ENCODE measurements at regions of chr17 and their contacts with region 1.

Region 1: DNA sequence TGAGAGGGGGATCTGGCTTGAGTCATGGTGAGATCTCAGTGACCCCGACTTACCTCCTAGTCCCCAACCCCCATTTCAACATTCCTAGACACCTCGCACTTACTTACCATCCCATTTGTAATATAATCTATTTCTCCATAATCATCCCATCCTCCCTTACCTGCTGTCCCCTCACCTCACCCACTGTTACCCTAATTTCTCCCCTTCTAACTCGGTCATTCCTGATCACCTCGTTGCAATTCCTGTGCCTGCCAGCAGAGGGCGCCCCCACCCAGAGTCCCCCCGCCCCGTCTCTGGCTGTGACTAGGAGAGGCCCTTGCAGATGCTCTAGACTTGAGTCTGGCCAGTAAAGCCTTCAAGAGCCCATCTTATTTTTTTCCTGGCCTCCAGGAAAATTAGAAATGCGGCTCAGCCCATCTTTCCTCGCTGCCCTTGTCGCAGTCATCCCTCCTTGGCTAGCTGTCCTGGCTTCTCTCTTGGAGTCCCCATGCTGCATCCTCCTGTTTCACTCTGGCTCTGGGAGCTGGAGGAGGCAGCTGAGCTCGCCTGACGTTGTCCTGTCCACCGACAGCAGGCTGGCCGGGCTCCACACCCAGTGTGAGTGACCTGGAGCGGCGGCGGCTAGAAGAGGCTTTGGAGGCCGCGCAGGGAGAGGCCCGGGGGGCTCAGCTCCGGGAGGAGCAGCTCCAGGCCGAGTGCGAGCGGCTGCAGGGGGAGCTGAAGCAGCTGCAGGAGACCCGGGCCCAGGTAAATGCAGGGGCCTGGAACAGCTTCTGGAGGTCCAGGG is 5.0 kb downstream of the TBKBP1 start:
- DNase-seq: peak; percentile 92
- H3K4me3 Mint-ChIP-seq: no peak overlapping the region
- H3K27ac Mint-ChIP-seq: peak overlapping the region; percentile 10
- H3K4me1 Mint-ChIP-seq: peaks cover 50% of the 10 kb centered on the region
- H3K27me3 Mint-ChIP-seq: peaks cover 3% of the 10 kb centered on the region

Region 2: GRCh38 chr17:47633996-47634395 is 64.9 kb before region 1 on chr17:
- intact Hi-C with region 1: no loop called
- DNase-seq: no peak
- H3K4me3 Mint-ChIP-seq: no peak overlapping the region
- H3K27ac Mint-ChIP-seq: no peak overlapping the region
- H3K4me1 Mint-ChIP-seq: peaks cover 7% of the 10 kb centered on the region
- H3K27me3 Mint-ChIP-seq: no peaks in the 10 kb centered on the region

Region 3: GRCh38 chr17:47650525-47651522 is 48.1 kb before region 1 on chr17:
- intact Hi-C with region 1: loop called (anchors 2 kb)
- DNase-seq: peak; percentile 98
- H3K4me3 Mint-ChIP-seq: peak overlapping the region; percentile 92
- H3K27ac Mint-ChIP-seq: peak overlapping the region; percentile 90
- H3K4me1 Mint-ChIP-seq: peaks cover 53% of the 10 kb centered on the region
- H3K27me3 Mint-ChIP-seq: no peaks in the 10 kb centered on the region

Region 4: GRCh38 chr17:47720754-47721533 is 22.0 kb after region 1 on chr17:
- intact Hi-C with region 1: loop called (anchors 1 kb)
- DNase-seq: peak; percentile 95
- H3K4me3 Mint-ChIP-seq: peak overlapping the region; percentile 76
- H3K27ac Mint-ChIP-seq: peak overlapping the region; percentile 93
- H3K4me1 Mint-ChIP-seq: peaks cover 80% of the 10 kb centered on the region
- H3K27me3 Mint-ChIP-seq: no peaks in the 10 kb centered on the region

Region 5: GRCh38 chr17:47733047-47733673 is 34.2 kb after region 1 on chr17 and contains the start of gene TBX21:
- intact Hi-C with region 1: loop called (anchors 1 kb)
- DNase-seq: peak; percentile 96
- H3K4me3 Mint-ChIP-seq: peak within 1 kb of the TSS; percentile 94
- H3K27ac Mint-ChIP-seq: peak within 1 kb of the TSS; percentile 93
- H3K4me1 Mint-ChIP-seq: peaks cover 69% of the 10 kb centered on the region
- H3K27me3 Mint-ChIP-seq: no peaks in the 10 kb centered on the region
- total RNA-seq, gene TBX21: 63.0 and 66.4 TPM in 2 replicates

Region 6: GRCh38 chr17:47742319-47743181 is 43.6 kb after region 1 on chr17:
- intact Hi-C with region 1: loop called (anchors 1 kb)
- DNase-seq: peak; percentile 81
- H3K4me3 Mint-ChIP-seq: no peak overlapping the region
- H3K27ac Mint-ChIP-seq: no peak overlapping the region
- H3K4me1 Mint-ChIP-seq: peaks cover 33% of the 10 kb centered on the region
- H3K27me3 Mint-ChIP-seq: no peaks in the 10 kb centered on the region

Region 7: DNA sequence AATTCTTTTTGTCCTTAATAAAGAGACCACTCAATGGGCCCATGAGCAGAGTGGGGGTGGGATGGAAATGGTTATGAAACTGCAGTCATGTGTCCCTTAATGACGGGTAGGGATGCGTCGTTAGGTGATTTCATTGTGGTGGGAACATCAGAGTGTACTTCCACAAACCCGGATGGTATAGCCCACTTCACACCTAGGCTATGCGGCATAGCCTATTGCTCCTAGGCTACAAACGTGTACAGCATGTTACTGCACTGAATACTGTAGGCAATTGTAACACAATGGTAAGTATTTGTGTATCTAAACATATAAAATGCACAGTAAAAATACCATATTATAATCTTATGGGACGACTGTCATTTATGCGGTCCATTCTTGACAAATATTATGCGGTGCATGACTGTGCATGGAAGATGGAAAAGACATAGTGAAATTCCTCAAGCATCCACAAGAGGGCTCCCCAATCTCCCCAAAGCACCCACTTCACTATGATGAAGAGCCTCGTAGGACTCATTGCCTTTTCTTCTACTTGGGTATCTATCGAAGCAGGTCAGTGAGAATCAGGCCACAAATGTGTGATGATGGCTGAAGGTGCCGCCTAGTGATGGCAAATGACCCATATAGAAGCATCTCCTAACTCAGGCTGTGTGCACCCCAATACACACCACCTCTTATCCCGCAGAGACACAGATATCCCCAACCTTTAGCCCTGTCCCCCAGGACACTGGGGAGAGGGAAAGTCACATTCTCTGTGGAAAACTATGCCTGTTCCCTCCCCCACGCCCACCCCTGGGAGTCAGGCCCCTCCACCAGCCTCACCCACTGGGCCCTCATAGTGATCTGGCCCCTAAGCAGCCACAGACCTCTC is 77.6 kb after region 1 on chr17:
- intact Hi-C with region 1: loop called (anchors 2 kb)
- DNase-seq: peak; percentile 81
- H3K4me3 Mint-ChIP-seq: no peak overlapping the region
- H3K27ac Mint-ChIP-seq: no peak overlapping the region
- H3K4me1 Mint-ChIP-seq: peaks cover 2% of the 10 kb centered on the region
- H3K27me3 Mint-ChIP-seq: peaks cover 52% of the 10 kb centered on the region

Region 8: GRCh38 chr17:47802341-47803022 is 103.5 kb after region 1 on chr17:
- intact Hi-C with region 1: loop called (anchors 1 kb)
- DNase-seq: peak; percentile 87
- H3K4me3 Mint-ChIP-seq: no peak overlapping the region
- H3K27ac Mint-ChIP-seq: no peak overlapping the region
- H3K4me1 Mint-ChIP-seq: peaks cover 3% of the 10 kb centered on the region
- H3K27me3 Mint-ChIP-seq: peaks cover 5% of the 10 kb centered on the region

Measured in activated CD4-positive, alpha-beta T cell treated with anti-CD3 and anti-CD28 coated beads, Interleukin-2, amount 10 ng/mL, durations not matched to agents 24 days and 14 days (primary cell).